Activated T-helper 1 cell treated with anti-CD3 and anti-CD28 coated beads, Interleukin-12 subunit alpha, Interleukin-12 subunit beta, Interleukin-2, Interleukin-4 antibody, amounts not matched to agents 30 ng/mL and 10 ng/mL and 1 ng/mL, durations not matched to agents 14 hours and 24 hours and 36 hours (primary cell): ENCODE measurements at regions of chr16 and their contacts with region 1.

Region 1: DNA sequence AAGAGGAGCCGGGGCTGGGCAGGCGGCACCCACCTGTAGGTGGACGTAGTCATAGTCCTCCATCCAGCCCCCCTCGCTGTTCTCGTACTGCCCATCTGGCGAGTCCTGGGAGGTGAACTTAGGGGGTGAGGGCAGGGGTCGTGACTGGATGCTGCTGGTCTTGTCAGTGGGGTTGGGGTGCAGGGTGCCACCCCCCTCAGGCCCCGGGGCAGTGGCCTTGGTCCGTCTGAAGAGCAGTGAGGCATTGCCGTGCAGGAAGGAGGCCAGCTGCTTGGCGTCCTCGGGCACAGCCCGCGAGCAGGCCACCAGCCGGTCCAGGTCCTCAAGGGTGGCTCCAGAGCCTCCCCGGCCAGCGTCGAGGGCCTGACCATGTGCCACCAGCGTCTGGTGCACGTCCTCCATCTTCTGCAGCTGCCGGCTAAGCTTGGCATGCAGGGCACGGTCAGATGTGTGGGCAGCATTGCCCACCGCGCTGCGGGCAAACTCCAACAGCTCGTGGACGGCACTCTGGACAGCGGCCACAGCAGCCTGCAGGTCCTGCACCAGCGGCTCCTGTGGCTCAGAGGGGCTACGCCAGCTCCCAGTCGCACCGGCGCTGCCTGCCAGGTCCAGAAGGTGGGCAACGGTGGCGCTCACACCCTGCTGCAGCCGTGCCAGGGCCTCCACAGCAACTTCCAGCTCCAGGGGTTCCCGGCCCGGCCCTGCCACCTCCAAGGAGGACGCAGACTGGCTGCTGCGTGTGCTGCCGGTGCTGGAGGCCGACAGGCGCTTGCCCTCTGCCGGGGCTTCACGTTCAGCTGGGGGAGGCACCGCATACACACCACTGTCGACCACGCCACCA is 16.3 kb downstream of the CTRB1 start:
- DNase-seq: no peak
- H3K4me3 Mint-ChIP-seq: no peak overlapping the region
- H3K27ac Mint-ChIP-seq: no peak overlapping the region
- H3K4me1 Mint-ChIP-seq: no peaks in the 10 kb centered on the region
- H3K27me3 Mint-ChIP-seq: peaks cover 13% of the 10 kb centered on the region

Region 2: GRCh38 chr16:75385507-75386152 is 150.6 kb after region 1 on chr16:
- intact Hi-C with region 1: loop called (anchors 1 kb)
- DNase-seq: no peak
- H3K4me3 Mint-ChIP-seq: no peak overlapping the region
- H3K27ac Mint-ChIP-seq: no peak overlapping the region
- H3K4me1 Mint-ChIP-seq: peaks cover 4% of the 10 kb centered on the region
- H3K27me3 Mint-ChIP-seq: peaks cover 14% of the 10 kb centered on the region

Region 3: GRCh38 chr16:75402821-75403475 is 167.9 kb after region 1 on chr16:
- intact Hi-C with region 1: loop called (anchors 1 kb)
- DNase-seq: no peak
- H3K4me3 Mint-ChIP-seq: no peak overlapping the region
- H3K27ac Mint-ChIP-seq: peak overlapping the region; percentile 15
- H3K4me1 Mint-ChIP-seq: peaks cover 12% of the 10 kb centered on the region
- H3K27me3 Mint-ChIP-seq: no peaks in the 10 kb centered on the region